Activated T-helper 2 cell treated with anti-CD3 and anti-CD28 coated beads, Interferon-gamma antibody, Interleukin-2, Interleukin-4, amounts not matched to agents 10 μg/mL and 5 μg/mL and 100 μg/mL, durations not matched to agents 14 hours and 24 hours and 36 hours (primary cell): ENCODE measurements at regions of chr1 and their contacts with region 1.

Region 1: GRCh38 chr1:117654493-117655219 is 48.8 kb downstream of the TENT5C start:
- DNase-seq: no peak
- H3K4me3 Mint-ChIP-seq: peak overlapping the region; percentile 28
- H3K27ac Mint-ChIP-seq: peak overlapping the region; percentile 84
- H3K4me1 Mint-ChIP-seq: peaks cover 80% of the 10 kb centered on the region
- H3K27me3 Mint-ChIP-seq: peaks cover 7% of the 10 kb centered on the region

Region 2: DNA sequence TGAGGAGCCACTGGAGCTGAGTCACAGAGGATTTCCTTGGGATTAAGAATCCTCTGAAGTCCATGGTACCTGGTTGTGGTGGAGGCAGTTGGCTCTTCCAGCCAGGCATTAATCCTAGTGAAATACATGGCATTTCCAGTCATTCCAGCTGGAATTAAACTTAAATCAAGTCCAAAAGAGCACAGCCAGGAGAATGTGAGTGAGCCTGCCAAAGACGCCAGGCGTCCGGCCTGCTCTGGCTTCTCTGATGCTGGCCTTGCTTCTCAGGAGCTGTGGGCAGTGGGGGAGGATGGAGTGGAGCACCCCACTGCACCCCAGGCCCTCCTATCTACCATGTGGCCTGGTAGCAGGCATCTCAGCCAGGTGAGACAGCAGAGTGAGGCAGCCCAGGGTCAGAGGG is 72.2 kb before region 1 on chr1:
- intact Hi-C with region 1: no loop called
- DNase-seq: no peak
- H3K4me3 Mint-ChIP-seq: no peak overlapping the region
- H3K27ac Mint-ChIP-seq: no peak overlapping the region
- H3K4me1 Mint-ChIP-seq: no peaks in the 10 kb centered on the region
- H3K27me3 Mint-ChIP-seq: no peaks in the 10 kb centered on the region

Region 3: DNA sequence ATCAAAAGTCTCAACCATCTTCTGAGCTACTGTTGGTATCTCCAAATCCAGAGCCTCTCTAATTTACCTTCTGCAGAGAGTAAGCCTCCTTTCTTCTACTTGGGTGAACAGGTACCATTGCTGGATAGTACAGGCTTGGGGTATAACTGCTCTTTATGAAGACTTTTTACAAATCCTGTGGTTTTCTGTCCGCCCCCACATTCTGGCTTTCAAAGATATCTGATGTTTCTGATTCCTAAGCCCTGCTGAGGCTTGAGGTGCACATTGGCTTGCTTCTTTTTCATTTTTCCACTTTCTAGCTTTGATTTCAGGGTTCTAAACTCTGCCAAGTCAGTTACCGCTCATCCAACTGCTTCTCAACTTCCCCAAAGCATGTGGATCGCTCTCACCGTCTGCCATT is 11.7 kb before region 1 on chr1:
- intact Hi-C with region 1: loop called (anchors 2 kb)
- DNase-seq: no peak
- H3K4me3 Mint-ChIP-seq: no peak overlapping the region
- H3K27ac Mint-ChIP-seq: no peak overlapping the region
- H3K4me1 Mint-ChIP-seq: peaks cover 8% of the 10 kb centered on the region
- H3K27me3 Mint-ChIP-seq: peaks cover 50% of the 10 kb centered on the region

Region 4: GRCh38 chr1:117674521-117675397 is 20.1 kb after region 1 on chr1:
- intact Hi-C with region 1: loop called (anchors 1 kb)
- DNase-seq: peak; percentile 35
- H3K4me3 Mint-ChIP-seq: no peak overlapping the region
- H3K27ac Mint-ChIP-seq: no peak overlapping the region
- H3K4me1 Mint-ChIP-seq: peaks cover 25% of the 10 kb centered on the region
- H3K27me3 Mint-ChIP-seq: peaks cover 10% of the 10 kb centered on the region